ENCODE measurements at regions of chr1 and their contacts with region 1.

Region 1: GRCh38 chr1:59947047-59947938 is 20.7 kb upstream of the CYP2J2 start:
- DNase-seq: peak; percentile 68
- H3K4me3 ChIP-seq: no peak overlapping the region
- H3K27ac ChIP-seq: no peak overlapping the region
- H3K4me1 ChIP-seq: peaks cover 0 to 6% (median 0%) of the 10 kb centered on the region in 4 donors
- H3K27me3 ChIP-seq: no peaks in the 10 kb centered on the region
- CTCF ChIP-seq: peak; percentile 66 to 84 (median 80)
- EP300 ChIP-seq: no peak
- POLR2A ChIP-seq: no peak

Region 2: DNA sequence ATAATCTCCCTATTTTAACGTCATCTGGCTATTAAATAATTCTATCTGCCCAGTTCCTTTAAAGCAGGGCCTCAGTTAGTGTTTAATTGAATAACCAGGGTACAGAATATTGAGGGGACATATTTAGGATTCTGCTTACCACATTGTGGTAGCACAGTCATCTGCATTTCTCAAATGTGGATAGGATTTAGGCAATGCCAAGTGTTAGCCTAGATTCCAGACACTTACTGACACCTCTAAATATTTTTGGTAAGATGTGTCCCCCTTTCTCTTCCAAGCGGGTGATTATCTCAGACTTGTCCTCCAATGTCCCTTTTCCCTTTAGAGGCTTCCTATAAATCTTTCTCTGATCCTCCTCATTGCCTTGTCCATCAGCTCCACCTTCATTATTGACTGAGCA is 293.3 kb before region 1 on chr1:
- intact Hi-C with region 1: no loop called
- DNase-seq: no peak
- H3K4me3 ChIP-seq: no peak overlapping the region
- H3K27ac ChIP-seq: no peak overlapping the region
- H3K4me1 ChIP-seq: no peaks in the 10 kb centered on the region
- H3K27me3 ChIP-seq: no peaks in the 10 kb centered on the region
- CTCF ChIP-seq: no peak
- EP300 ChIP-seq: no peak
- POLR2A ChIP-seq: no peak

Region 3: DNA sequence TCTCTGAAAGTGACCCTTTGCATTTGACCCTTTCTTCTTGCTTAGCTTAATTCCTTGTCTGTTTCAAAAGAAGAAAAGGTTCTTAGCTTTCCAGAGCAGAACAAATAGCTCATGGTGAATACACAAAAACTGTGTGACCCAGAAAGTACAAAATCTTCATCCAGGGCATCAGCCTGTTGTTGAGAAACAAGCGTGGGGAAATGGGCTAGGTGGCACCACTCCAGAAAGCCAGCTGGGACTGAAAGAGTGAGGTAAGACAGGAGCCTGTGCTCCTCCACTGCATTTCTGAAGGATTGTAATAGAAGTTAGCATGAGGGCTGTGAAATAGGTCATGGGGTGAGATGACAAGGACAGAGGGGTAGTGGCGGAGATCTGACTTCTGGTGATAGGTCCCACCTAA is 66.6 kb before region 1 on chr1:
- intact Hi-C with region 1: loop called (anchors 5 kb)
- DNase-seq: no peak
- H3K4me3 ChIP-seq: no peak overlapping the region
- H3K27ac ChIP-seq: no peak overlapping the region
- H3K4me1 ChIP-seq: no peaks in the 10 kb centered on the region
- H3K27me3 ChIP-seq: no peaks in the 10 kb centered on the region
- CTCF ChIP-seq: no peak
- EP300 ChIP-seq: no peak
- POLR2A ChIP-seq: no peak

Measured in sigmoid colon (tissue), 7 donors.